Breast epithelium (tissue), 4 donors: ENCODE measurements at regions of chr1 and their contacts with region 1.

Region 1: DNA sequence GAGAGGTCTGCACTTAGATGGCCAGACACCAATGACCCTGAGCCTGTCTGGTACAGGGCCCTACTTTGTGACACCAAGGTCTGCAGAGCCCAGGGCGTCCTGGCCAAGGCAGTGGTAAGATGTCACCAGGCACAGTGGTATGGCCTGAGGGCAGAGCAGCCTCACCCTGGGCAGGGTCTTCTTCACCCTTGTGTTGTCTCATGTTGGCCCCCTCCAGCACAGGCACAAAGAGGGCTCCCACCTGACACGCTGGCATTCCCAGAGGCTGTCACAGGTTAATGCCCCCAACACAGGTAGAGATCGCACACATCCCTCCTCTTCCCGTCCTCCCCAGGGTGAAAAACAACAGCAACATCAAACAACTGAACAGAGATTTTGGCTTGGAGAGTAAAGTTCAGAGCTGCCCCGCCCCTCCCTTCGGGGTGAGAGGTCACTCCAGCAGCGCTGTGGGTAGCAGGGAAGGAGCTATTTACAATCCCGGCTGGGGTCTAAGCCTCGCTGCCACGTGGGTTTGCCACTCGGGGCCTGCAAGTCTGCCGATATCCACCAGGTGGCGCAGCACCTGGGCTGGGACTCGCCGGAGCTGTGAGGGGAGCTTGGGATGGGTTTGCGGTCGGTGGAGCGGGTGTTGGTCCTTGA is 12.6 kb downstream of the EFNA3 start:
- DNase-seq: peak in 1 of 2 donors; percentile 78
- H3K4me3 ChIP-seq: no peak overlapping the region
- H3K27ac ChIP-seq: no peak overlapping the region
- H3K4me1 ChIP-seq: peaks cover 0 to 10% of the 10 kb centered on the region in 2 donors
- H3K27me3 ChIP-seq: no peaks in the 10 kb centered on the region
- CTCF ChIP-seq: peak; percentile 95 to 98 (median 97)
- POLR2A ChIP-seq: no peak

Region 2: DNA sequence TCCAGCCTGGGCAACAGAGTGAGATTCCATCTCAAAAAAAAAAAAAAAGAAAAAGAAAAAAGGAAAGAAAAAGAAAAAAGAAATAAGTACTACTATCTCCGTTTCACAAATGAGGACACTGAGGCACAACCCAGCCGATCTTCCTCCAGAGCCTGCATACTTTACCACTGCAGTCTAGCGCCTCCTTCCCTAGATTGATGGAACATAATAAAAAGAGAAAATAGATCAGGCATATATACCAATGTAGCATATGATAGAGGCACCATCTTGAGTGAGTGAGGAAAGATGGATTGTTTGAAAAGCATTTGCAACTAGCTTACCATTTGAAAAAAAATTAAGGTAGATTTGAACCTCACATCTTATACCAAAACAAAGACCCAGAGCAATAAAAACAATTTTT is 54.3 kb after region 1 on chr1:
- intact Hi-C with region 1: loop called (anchors 2 kb)
- DNase-seq: no peak
- H3K4me3 ChIP-seq: no peak overlapping the region
- H3K27ac ChIP-seq: no peak overlapping the region
- H3K4me1 ChIP-seq: no peaks in the 10 kb centered on the region
- H3K27me3 ChIP-seq: no peaks in the 10 kb centered on the region
- CTCF ChIP-seq: no peak
- POLR2A ChIP-seq: no peak

Region 3: DNA sequence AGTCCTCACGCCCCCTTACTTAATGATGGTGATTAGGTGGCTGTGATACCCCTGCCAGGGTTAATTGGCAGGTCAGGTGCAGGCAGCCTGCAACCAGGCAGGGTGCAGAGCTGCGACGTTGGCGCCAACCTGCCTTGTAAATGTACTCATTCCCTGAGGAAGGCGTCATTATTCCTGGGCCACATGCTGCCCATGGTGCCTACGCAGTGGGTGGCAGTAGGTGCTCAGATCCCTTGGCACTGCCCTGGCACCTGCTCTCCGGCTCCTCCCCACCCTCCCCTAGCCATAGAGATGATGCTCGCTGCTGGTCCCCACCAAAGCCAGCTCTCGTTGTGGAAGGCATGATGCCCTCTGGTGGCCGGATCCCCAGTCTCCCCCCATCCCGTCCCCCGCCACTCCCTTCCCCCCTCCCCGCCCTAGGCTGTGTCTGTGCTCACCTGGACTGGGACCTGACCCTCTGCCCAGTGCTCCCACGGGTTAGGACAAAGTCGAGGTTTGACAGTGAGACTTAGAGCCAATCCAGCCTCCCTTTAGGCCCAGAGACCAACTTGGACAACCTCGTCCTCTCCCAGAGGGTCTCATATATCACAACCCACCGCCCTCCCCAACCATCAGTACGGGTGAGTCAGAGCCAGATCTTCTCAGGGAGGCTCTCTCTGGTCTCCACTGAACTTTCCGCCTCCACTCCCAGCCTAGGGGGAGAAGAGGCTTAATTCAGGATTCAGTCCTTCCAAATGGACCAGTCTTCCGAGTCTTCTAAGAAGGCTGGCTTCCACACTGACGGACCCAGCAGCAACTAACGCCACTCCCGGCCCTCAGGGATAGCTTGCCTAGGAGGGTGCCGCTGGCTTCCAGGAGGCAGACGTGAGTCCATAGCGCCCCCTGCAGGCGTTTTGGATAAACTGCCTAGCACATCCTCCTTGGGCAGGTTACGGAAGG is 76.2 kb after region 1 on chr1:
- intact Hi-C with region 1: loop called (anchors 5 kb)
- DNase-seq: peak; percentile 75 to 88
- H3K4me3 ChIP-seq: peak overlapping the region in 2 of 3 donors; percentile 7 to 50
- H3K27ac ChIP-seq: peak overlapping the region; percentile 40 to 79
- H3K4me1 ChIP-seq: peaks cover 3% of the 10 kb centered on the region in 2 donors
- H3K27me3 ChIP-seq: no peaks in the 10 kb centered on the region
- CTCF ChIP-seq: peak; percentile 83 to 95 (median 94)
- POLR2A ChIP-seq: no peak